AG04449 (cell line): ENCODE measurements at regions of chr13 and their contacts with region 1.

Region 1: GRCh38 chr13:106536244-106537034 is 977 bp upstream of the EFNB2 start:
- DNase-seq: no peak
- H3K4me3 ChIP-seq: peak overlapping the region; percentile 74
- CTCF ChIP-seq: peak; percentile 98

Region 2: GRCh38 chr13:104571161-104571892 is 1965.1 kb before region 1 on chr13:
- CTCF ChIA-PET with region 1: interaction called, 55 read pairs
- POLR2A ChIA-PET with region 1: interaction called, 3 read pairs
- DNase-seq: peak; percentile 45
- H3K4me3 ChIP-seq: peak overlapping the region; percentile 21
- CTCF ChIP-seq: peak; percentile 77

Region 3: GRCh38 chr13:104773775-104774174 is 1762.7 kb before region 1 on chr13:
- CTCF ChIA-PET with region 1: interaction called, 16 read pairs
- POLR2A ChIA-PET with region 1: interaction called, 6 read pairs
- DNase-seq: peak; percentile 9
- H3K4me3 ChIP-seq: no peak overlapping the region
- CTCF ChIP-seq: peak; percentile 54

Region 4: DNA sequence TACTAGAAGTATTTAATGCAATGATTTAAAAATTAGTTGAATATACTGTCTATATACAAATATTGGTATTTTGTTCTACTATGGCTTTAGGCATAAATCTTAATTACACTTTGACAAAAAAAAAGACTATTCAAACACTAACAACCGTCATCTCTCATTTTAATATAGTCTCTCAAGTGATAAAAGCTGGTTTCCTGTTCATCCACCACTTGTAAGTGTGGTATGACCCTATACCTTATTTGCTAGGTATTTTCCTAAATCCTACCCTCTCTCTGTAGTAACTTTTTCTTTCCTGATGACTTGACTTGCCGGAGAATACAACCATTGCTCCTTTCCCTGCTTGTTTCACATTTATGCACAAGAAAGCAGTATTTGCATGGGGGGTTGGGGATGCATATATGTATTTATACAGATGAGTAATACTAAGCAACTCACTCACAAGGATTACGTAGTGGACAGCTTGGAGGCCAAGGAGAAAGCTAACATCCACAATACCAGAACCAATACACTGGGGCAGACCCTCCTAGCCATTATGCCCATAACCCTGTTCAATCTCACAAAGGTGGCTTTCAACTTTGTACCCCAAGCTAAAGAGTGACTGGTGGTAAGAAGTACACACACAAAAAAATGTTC is 11.7 kb after region 1 on chr13:
- CTCF ChIA-PET with region 1: interaction called, 33 read pairs
- POLR2A ChIA-PET with region 1: interaction called, 4 read pairs
- DNase-seq: no peak
- H3K4me3 ChIP-seq: no peak overlapping the region
- CTCF ChIP-seq: no peak

Region 5: GRCh38 chr13:106555631-106556328 is 19.3 kb after region 1 on chr13:
- CTCF ChIA-PET with region 1: interaction called, 33 read pairs
- POLR2A ChIA-PET with region 1: no interaction called
- DNase-seq: no peak
- H3K4me3 ChIP-seq: no peak overlapping the region
- CTCF ChIP-seq: no peak

Region 6: GRCh38 chr13:106567474-106568298 is 31.2 kb after region 1 on chr13 and contains the start of gene ARGLU1:
- CTCF ChIA-PET with region 1: interaction called, 6 read pairs
- POLR2A ChIA-PET with region 1: interaction called, 19 read pairs
- DNase-seq: peak; percentile 29
- H3K4me3 ChIP-seq: peak within 1 kb of the TSS; percentile 87
- CTCF ChIP-seq: no peak

Region 7: GRCh38 chr13:106619688-106620555 is 83.5 kb after region 1 on chr13:
- CTCF ChIA-PET with region 1: interaction called, 10 read pairs
- POLR2A ChIA-PET with region 1: no interaction called
- DNase-seq: peak; percentile 16
- H3K4me3 ChIP-seq: no peak overlapping the region
- CTCF ChIP-seq: peak; percentile 84